Gastrocnemius medialis (tissue), 4 donors: ENCODE measurements at regions of chr7 and their contacts with region 1.

Region 1: GRCh38 chr7:104983578-104984539 is 30.1 kb upstream of the KMT2E start:
- DNase-seq: peak; percentile 84 to 88
- ATAC-seq: peak; percentile 86 to 89
- H3K4me3 ChIP-seq: peak overlapping the region; percentile 68 to 82 (median 77)
- H3K27ac ChIP-seq: no peak overlapping the region
- H3K4me1 ChIP-seq: peaks cover 36 to 44% of the 10 kb centered on the region in 2 donors
- H3K27me3 ChIP-seq: no peaks in the 10 kb centered on the region
- CTCF ChIP-seq: peak; percentile 60 to 81 (median 70)
- POLR2A ChIP-seq: peak; percentile 89 to 92

Region 2: GRCh38 chr7:105036217-105037168 is 52.6 kb after region 1 on chr7:
- in situ Hi-C with region 1: loop called in 2 of 4 experiments (anchors 5 to 10 kb)
- intact Hi-C with region 1: loop called (anchors 1 kb)
- DNase-seq: peak; percentile 22 to 64
- ATAC-seq: peak; percentile 55 to 72
- H3K4me3 ChIP-seq: no peak overlapping the region
- H3K27ac ChIP-seq: peak overlapping the region; percentile 36 to 76 (median 66)
- H3K4me1 ChIP-seq: peaks cover 64 to 72% of the 10 kb centered on the region in 2 donors
- H3K27me3 ChIP-seq: no peaks in the 10 kb centered on the region
- CTCF ChIP-seq: no peak
- POLR2A ChIP-seq: no peak

Region 3: GRCh38 chr7:105098863-105099515 is 115.1 kb after region 1 on chr7:
- in situ Hi-C with region 1: no loop called
- intact Hi-C with region 1: loop called (anchors 2 kb)
- DNase-seq: no peak
- ATAC-seq: no peak
- H3K4me3 ChIP-seq: no peak overlapping the region
- H3K27ac ChIP-seq: peak overlapping the region; percentile 74 to 85 (median 75)
- H3K4me1 ChIP-seq: peaks cover 18 to 39% of the 10 kb centered on the region in 2 donors
- H3K27me3 ChIP-seq: no peaks in the 10 kb centered on the region
- CTCF ChIP-seq: no peak
- POLR2A ChIP-seq: no peak

Region 4: GRCh38 chr7:105198223-105198622 is 214.4 kb after region 1 on chr7:
- in situ Hi-C with region 1: no loop called
- intact Hi-C with region 1: no loop called
- DNase-seq: no peak
- ATAC-seq: peak; percentile 36 to 53
- H3K4me3 ChIP-seq: no peak overlapping the region
- H3K27ac ChIP-seq: no peak overlapping the region
- H3K4me1 ChIP-seq: peaks cover 19 to 32% of the 10 kb centered on the region in 2 donors
- H3K27me3 ChIP-seq: no peaks in the 10 kb centered on the region
- CTCF ChIP-seq: no peak
- POLR2A ChIP-seq: no peak

Region 5: GRCh38 chr7:105336009-105336408 is 352.1 kb after region 1 on chr7:
- in situ Hi-C with region 1: loop called in 2 of 4 experiments (anchors 25 kb)
- intact Hi-C with region 1: loop called (anchors 5 kb)
- DNase-seq: no peak
- ATAC-seq: no peak
- H3K4me3 ChIP-seq: no peak overlapping the region
- H3K27ac ChIP-seq: no peak overlapping the region
- H3K4me1 ChIP-seq: peaks cover 0 to 10% of the 10 kb centered on the region in 2 donors
- H3K27me3 ChIP-seq: no peaks in the 10 kb centered on the region
- CTCF ChIP-seq: peak in 3 of 5 experiments; percentile 23 to 47 (median 25)
- POLR2A ChIP-seq: no peak

Region 6: GRCh38 chr7:105426606-105427146 is 442.8 kb after region 1 on chr7:
- in situ Hi-C with region 1: no loop called
- intact Hi-C with region 1: no loop called
- DNase-seq: no peak
- ATAC-seq: no peak
- H3K4me3 ChIP-seq: no peak overlapping the region
- H3K27ac ChIP-seq: no peak overlapping the region
- H3K4me1 ChIP-seq: no peaks in the 10 kb centered on the region
- H3K27me3 ChIP-seq: no peaks in the 10 kb centered on the region
- CTCF ChIP-seq: no peak
- POLR2A ChIP-seq: no peak

Region 7: DNA sequence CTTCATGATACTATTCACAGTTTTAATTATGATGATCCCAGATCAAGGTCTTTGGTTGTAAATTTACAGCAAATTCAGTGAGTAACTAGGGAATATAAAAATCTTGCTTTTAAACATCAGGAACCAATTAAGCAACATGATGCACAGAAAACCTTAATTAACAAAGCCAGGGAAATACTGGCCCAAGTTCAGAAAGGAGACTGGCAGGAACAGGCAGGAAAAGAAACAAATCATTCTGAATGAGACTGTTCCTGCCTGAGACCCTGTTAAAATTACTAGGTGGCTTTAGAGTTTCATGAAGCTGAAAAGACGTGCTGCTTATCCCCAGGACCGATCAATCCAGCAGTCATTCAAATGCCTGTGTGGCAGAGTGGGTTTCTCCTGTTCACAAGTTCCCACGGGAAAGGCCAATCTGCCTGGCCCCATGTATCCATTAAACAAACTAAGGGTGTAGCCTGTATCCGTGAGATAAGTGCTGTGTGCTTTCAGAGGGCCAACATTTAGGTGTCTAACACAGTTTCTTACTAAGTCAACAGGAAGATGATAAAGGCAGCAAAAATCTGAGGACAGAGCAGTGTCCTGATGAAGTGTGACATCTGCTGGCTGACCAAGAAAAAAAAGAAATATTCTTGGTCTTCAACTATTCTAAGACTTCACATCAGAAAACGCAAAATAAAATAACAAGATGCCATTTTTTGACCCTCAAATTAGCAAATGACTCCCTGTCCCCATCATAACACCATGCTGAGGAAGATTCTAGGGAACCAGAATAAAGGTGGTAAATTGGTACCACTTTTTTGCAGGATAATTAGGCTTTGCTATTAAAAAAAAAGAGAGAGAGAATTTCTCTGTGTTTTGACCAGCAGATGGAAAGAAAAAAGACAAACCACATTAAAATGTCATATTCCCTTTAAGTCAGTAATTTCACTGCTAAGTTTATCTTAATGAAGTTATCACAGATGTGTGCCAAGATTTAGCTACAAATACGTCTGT is 504.0 kb after region 1 on chr7:
- in situ Hi-C with region 1: no loop called
- intact Hi-C with region 1: loop called (anchors 2 kb)
- DNase-seq: no peak
- ATAC-seq: peak; percentile 69 to 78
- H3K4me3 ChIP-seq: no peak overlapping the region
- H3K27ac ChIP-seq: peak overlapping the region in 3 of 4 donors; percentile 23 to 45 (median 24)
- H3K4me1 ChIP-seq: no peaks in the 10 kb centered on the region
- H3K27me3 ChIP-seq: no peaks in the 10 kb centered on the region
- CTCF ChIP-seq: peak in 3 of 5 experiments; percentile 9 to 35 (median 24)
- POLR2A ChIP-seq: no peak

Region 8: GRCh38 chr7:106112117-106112971 is 1128.5 kb after region 1 on chr7 and contains the start of gene SYPL1:
- in situ Hi-C with region 1: loop called in 1 of 4 experiments (anchors 25 kb)
- intact Hi-C with region 1: no loop called
- DNase-seq: peak; percentile 90 to 92
- ATAC-seq: peak; percentile 77 to 80
- H3K4me3 ChIP-seq: peak within 1 kb of the TSS; percentile 71 to 82 (median 72)
- H3K27ac ChIP-seq: peak within 1 kb of the TSS; percentile 94 to 99 (median 98)
- H3K4me1 ChIP-seq: peaks cover 53 to 58% of the 10 kb centered on the region in 2 donors
- H3K27me3 ChIP-seq: no peaks in the 10 kb centered on the region
- CTCF ChIP-seq: peak in 1 of 5 experiments; percentile 31
- POLR2A ChIP-seq: peak; percentile 10 to 76
- total RNA-seq, gene SYPL1: 81.5 to 90.9 (median 83.2) TPM